ENCODE measurements at regions of chr6 and their contacts with region 1.

Region 1: DNA sequence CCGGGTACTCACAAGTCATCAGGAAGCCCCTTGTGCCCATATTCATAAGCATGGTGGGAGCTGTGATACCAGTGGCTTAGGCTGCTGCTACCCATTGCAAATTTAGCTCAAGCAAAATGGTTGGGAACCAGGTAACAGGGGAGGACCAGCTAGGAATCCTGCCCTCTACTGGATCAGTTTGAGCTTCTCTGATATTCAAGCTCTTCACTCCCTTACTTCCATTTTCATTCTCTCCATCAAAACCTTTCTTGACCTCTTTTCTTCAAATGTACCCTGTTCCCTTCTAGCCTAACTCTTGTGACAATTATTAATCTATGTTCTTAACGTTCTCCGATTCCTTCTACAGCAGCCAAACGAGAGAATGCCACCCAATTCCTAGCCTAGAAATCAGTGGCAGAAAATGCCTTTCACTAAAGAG is 9.7 kb downstream of the NOL7 start:
- DNase-seq: no peak
- ATAC-seq: peak in 1 of 2 donors; percentile 51

Region 2: DNA sequence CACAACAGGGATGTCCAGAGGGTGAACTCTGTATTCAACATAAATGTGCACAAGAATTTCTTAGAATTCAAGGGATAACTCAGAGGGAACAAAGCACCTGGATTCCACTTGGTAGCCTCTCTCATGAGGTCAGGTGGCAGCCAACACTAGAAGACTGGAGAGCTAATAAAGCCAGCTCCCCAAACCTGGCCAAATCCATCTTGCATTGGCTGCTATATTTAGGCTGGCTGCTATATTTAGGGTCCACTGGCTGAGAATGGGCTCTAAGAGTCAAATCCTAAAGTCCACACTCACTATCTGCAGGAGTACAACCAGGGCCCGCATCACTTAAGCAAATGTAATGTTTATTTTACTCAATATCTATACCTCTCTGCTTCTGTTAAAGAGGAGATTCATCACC is 316.5 kb before region 1 on chr6:
- intact Hi-C with region 1: no loop called
- DNase-seq: no peak
- ATAC-seq: peak; percentile 35 to 46

Region 3: GRCh38 chr6:13767121-13767808 is 142.4 kb after region 1 on chr6:
- intact Hi-C with region 1: loop called in 1 of 2 experiments (anchors 10 kb)
- DNase-seq: peak; percentile 65
- ATAC-seq: peak; percentile 87 to 92